B cell (primary cell): ENCODE measurements at regions of chr14 and their contacts with region 1.

Region 1: GRCh38 chr14:20682435-20683124 is 1.8 kb upstream of the RNASE4 start:
- DNase-seq: peak; percentile 88
- ATAC-seq: peak; percentile 57
- H3K4me3 ChIP-seq: peak overlapping the region; percentile 81 to 95 (median 92)
- H3K4me3 Mint-ChIP-seq: no peak overlapping the region
- H3K27ac ChIP-seq: peak overlapping the region; percentile 92 to 94
- H3K27ac Mint-ChIP-seq: no peak overlapping the region
- H3K4me1 ChIP-seq: peaks cover 31 to 48% of the 10 kb centered on the region in 2 donors
- H3K4me1 Mint-ChIP-seq: peaks cover 15% of the 10 kb centered on the region
- H3K27me3 ChIP-seq: no peaks in the 10 kb centered on the region
- H3K27me3 Mint-ChIP-seq: no peaks in the 10 kb centered on the region
- CTCF ChIP-seq: no peak

Region 2: GRCh38 chr14:20327005-20327869 is 355.3 kb before region 1 on chr14:
- CTCF ChIA-PET with region 1: interaction called, 24 read pairs
- POLR2A ChIA-PET with region 1: interaction called, 3 read pairs
- intact Hi-C with region 1: no loop called
- DNase-seq: peak; percentile 81
- ATAC-seq: peak; percentile 67
- H3K4me3 ChIP-seq: no peak overlapping the region
- H3K4me3 Mint-ChIP-seq: peak overlapping the region; percentile 1
- H3K27ac ChIP-seq: no peak overlapping the region
- H3K27ac Mint-ChIP-seq: peak overlapping the region; percentile 33
- H3K4me1 ChIP-seq: peaks cover under 1 to 6% of the 10 kb centered on the region in 2 donors
- H3K4me1 Mint-ChIP-seq: peaks cover 30% of the 10 kb centered on the region
- H3K27me3 ChIP-seq: no peaks in the 10 kb centered on the region
- H3K27me3 Mint-ChIP-seq: no peaks in the 10 kb centered on the region
- CTCF ChIP-seq: peak; percentile 91

Region 3: DNA sequence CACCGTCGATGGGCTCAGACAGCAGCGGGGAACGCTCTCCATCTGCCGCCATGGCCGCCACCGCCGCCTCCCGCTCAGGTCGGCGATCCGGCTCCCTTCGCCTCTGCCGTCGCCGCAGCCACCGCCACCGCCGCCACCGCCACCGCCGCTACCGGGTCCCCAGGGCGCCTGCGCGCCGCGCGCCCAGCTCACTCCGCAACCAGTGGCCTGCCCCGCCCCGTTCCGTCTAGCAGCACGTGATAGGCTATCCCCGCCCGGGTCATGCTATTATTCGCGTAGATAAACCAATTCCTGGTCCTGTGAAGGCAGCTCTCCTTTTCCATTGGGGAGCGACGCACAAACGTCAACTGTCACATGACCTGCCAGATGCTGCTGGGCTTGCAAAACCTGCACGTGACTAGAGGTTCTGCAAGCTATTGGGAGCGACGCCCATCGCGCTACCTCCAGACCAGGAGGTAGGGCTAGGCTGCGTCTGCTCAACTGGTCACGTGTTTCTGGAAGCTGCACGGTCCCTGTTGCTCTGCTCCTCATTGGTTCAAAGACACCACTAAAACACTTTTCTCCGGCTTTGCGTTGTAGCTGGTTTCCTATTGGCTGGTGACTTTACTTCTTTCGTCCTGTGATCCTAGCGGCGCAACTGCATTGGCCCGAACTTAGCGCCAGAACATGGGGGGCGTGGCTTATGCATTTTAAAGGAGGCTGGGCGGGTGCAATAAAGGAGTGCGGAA is 221.1 kb before region 1 on chr14 and contains the start of gene PIP4P1:
- CTCF ChIA-PET with region 1: interaction called, 6 read pairs
- POLR2A ChIA-PET with region 1: interaction called, 7 read pairs
- intact Hi-C with region 1: loop called (anchors 1 kb)
- DNase-seq: peak; percentile 100
- ATAC-seq: peak; percentile 84
- H3K4me3 ChIP-seq: peak within 1 kb of the TSS; percentile 75 to 90 (median 83)
- H3K4me3 Mint-ChIP-seq: peak within 1 kb of the TSS; percentile 94
- H3K27ac ChIP-seq: peak within 1 kb of the TSS; percentile 98
- H3K27ac Mint-ChIP-seq: peak within 1 kb of the TSS; percentile 98
- H3K4me1 ChIP-seq: peaks cover 33 to 59% of the 10 kb centered on the region in 2 donors
- H3K4me1 Mint-ChIP-seq: peaks cover 45% of the 10 kb centered on the region
- H3K27me3 ChIP-seq: no peaks in the 10 kb centered on the region
- H3K27me3 Mint-ChIP-seq: no peaks in the 10 kb centered on the region
- CTCF ChIP-seq: no peak
- total RNA-seq, gene PIP4P1: 97.5 and 101 TPM in 2 replicates

Region 4: DNA sequence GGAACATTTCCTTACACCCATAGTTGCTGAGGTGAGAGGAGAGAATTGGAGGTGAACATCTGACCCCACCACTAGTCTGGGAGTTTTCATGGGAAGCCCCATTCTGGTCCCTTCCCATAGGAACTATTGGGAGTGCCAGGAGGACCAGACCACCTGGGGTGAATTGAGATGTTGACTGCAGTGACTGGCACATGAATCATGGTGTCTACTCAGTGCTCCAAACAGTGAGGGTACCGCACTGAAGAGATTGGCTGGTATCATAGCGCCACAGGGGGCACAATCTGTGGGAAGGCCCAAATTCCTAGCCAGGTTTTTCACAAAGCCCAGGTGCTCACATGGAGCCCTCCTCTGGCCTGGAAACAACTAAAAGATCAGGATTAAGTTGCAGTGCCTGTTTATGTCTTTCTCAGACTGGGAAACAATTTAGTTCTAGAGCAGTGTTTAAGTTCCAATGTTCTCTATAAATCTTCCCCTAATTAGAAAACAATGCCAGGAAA is 118.0 kb before region 1 on chr14:
- CTCF ChIA-PET with region 1: no interaction called
- POLR2A ChIA-PET with region 1: no interaction called
- intact Hi-C with region 1: no loop called
- DNase-seq: no peak
- ATAC-seq: no peak
- H3K4me3 ChIP-seq: no peak overlapping the region
- H3K4me3 Mint-ChIP-seq: no peak overlapping the region
- H3K27ac ChIP-seq: no peak overlapping the region
- H3K27ac Mint-ChIP-seq: no peak overlapping the region
- H3K4me1 ChIP-seq: no peaks in the 10 kb centered on the region
- H3K4me1 Mint-ChIP-seq: no peaks in the 10 kb centered on the region
- H3K27me3 ChIP-seq: no peaks in the 10 kb centered on the region
- H3K27me3 Mint-ChIP-seq: peaks cover 11% of the 10 kb centered on the region
- CTCF ChIP-seq: no peak

Region 5: GRCh38 chr14:20662968-20663732 is 19.4 kb before region 1 on chr14:
- CTCF ChIA-PET with region 1: interaction called, 445 read pairs
- POLR2A ChIA-PET with region 1: interaction called, 42 read pairs
- intact Hi-C with region 1: loop called (anchors 1 kb)
- DNase-seq: peak; percentile 90
- ATAC-seq: peak; percentile 85
- H3K4me3 ChIP-seq: peak overlapping the region; percentile 30 to 93 (median 64)
- H3K4me3 Mint-ChIP-seq: peak overlapping the region; percentile 93
- H3K27ac ChIP-seq: peak overlapping the region in 1 of 2 donors; percentile 34
- H3K27ac Mint-ChIP-seq: peak overlapping the region; percentile 62
- H3K4me1 ChIP-seq: peaks cover 39 to 55% of the 10 kb centered on the region in 2 donors
- H3K4me1 Mint-ChIP-seq: peaks cover 53% of the 10 kb centered on the region
- H3K27me3 ChIP-seq: peaks cover 0 to 7% (median 0%) of the 10 kb centered on the region in 4 experiments
- H3K27me3 Mint-ChIP-seq: no peaks in the 10 kb centered on the region
- CTCF ChIP-seq: peak; percentile 71

Region 6: DNA sequence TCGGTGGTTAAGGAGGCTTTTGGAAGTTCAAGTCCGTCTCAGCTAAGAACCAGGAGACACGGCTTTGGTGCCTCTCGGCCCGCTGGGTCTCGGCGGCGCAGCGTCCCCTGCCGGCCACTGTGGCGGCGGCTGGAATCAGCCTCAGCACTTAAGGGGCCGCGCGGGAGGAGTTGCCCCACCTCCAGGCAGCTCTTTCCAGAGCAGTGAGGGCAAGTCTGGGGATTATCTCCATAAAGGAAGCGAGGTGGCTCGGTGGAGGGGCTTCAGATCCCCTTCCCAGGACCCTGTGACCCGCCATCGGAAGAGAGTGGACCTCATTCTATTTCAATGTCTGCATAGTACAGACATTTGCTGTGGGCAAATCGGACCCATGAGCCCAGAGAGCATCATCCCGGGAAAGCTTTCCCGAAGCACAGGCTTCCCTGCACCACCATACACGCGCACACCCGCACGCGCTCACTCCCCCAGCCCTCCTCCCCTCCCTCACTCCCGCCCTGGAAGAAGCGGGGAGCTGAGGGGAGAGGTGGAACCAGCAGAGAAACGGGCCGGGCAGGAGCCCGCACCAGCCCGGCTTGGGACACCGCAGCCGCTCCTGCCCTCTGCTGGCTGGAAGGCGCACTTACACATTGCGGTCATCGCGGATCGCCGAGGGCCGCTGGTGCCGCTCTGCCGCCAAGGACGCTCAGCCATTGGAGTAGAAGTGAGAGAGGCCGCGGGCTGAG is 288.6 kb after region 1 on chr14:
- CTCF ChIA-PET with region 1: interaction called, 3 read pairs
- POLR2A ChIA-PET with region 1: no interaction called
- intact Hi-C with region 1: loop called (anchors 5 kb)
- DNase-seq: peak; percentile 89
- ATAC-seq: peak; percentile 96
- H3K4me3 ChIP-seq: peak overlapping the region; percentile 62 to 76 (median 68)
- H3K4me3 Mint-ChIP-seq: peak overlapping the region; percentile 96
- H3K27ac ChIP-seq: no peak overlapping the region
- H3K27ac Mint-ChIP-seq: peak overlapping the region; percentile 73
- H3K4me1 ChIP-seq: peaks cover 8 to 14% of the 10 kb centered on the region in 2 donors
- H3K4me1 Mint-ChIP-seq: peaks cover 11% of the 10 kb centered on the region
- H3K27me3 ChIP-seq: peaks cover 0 to 43% (median 10%) of the 10 kb centered on the region in 4 experiments
- H3K27me3 Mint-ChIP-seq: peaks cover 63% of the 10 kb centered on the region
- CTCF ChIP-seq: peak; percentile 94